Activated CD4-positive, alpha-beta T cell treated with anti-CD3 and anti-CD28 coated beads for 36 hours (primary cell): ENCODE measurements at regions of chr4 and their contacts with region 1.

Region 1: DNA sequence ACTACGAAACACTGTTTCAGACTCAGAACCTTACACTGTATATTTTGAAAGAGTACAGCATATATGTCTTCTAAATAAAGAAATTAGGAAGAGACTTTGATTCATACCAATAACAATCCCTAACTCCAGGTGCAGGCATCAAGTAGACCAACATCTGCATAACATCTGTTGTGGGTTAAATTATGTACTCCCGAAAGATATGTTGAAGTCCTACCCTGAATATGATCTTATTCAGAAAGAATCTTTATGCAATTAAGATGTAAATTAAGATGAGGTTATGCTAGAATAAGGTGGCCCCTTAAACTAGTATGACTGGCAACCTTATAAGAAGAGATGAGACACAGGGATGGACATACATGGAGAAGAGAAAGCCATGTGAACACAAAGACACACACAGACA is 117.9 kb downstream of the INPP4B start:
- DNase-seq: no peak
- ATAC-seq: no peak
- H3K4me3 Mint-ChIP-seq: no peak overlapping the region
- H3K27ac Mint-ChIP-seq: no peak overlapping the region
- H3K4me1 Mint-ChIP-seq: peaks cover 4% of the 10 kb centered on the region
- H3K27me3 Mint-ChIP-seq: no peaks in the 10 kb centered on the region

Region 2: GRCh38 chr4:142030010-142030409 is 698.2 kb before region 1 on chr4:
- CTCF ChIA-PET with region 1: no interaction called
- POLR2A ChIA-PET with region 1: interaction called, 18 read pairs
- intact Hi-C with region 1: no loop called
- DNase-seq: no peak
- ATAC-seq: no peak
- H3K4me3 Mint-ChIP-seq: no peak overlapping the region
- H3K27ac Mint-ChIP-seq: no peak overlapping the region
- H3K4me1 Mint-ChIP-seq: no peaks in the 10 kb centered on the region
- H3K27me3 Mint-ChIP-seq: no peaks in the 10 kb centered on the region

Region 3: GRCh38 chr4:142535009-142535408 is 193.2 kb before region 1 on chr4:
- CTCF ChIA-PET with region 1: no interaction called
- POLR2A ChIA-PET with region 1: no interaction called
- intact Hi-C with region 1: no loop called
- DNase-seq: no peak
- ATAC-seq: peak; percentile 89
- H3K4me3 Mint-ChIP-seq: no peak overlapping the region
- H3K27ac Mint-ChIP-seq: peak overlapping the region; percentile 58
- H3K4me1 Mint-ChIP-seq: peaks cover 37% of the 10 kb centered on the region
- H3K27me3 Mint-ChIP-seq: no peaks in the 10 kb centered on the region